ENCODE measurements at regions of chr18 and their contacts with region 1.

Region 1: DNA sequence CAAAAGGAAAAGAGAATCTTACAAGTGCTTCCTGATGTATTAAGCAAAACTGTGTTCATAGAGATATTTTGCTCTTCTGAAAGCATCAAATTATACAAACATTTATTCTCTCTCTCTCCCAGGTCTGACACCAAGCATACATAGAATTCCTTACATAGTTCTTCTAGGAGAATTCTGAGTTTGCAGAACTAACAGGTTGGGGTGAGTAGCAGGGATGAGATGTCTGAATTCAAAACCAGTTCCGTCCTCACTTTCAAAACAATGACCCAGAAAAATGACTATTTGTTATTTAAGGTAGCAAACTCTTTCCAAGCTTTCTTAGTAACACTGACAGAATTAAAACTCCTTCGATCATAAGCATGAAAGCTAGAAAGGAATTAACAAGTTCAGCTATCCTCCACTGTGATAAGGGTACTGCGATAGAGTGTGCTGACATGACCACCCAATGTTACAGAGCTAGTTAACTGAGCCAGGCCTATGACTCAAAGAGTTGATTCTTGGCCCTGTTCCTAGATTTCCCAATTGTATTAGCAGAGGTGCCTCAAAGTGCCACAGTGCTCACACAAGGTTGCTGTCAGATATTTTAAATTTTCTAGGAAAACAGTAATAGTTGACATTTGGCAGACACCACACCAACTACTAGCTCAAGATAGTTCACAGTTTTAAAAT is 85.8 kb upstream of the SETBP1 start:
- DNase-seq: no peak
- ATAC-seq: peak; percentile 36; the same call in 1 of the 2 replicates
- H3K4me3 Mint-ChIP-seq: no peak overlapping the region
- H3K27ac Mint-ChIP-seq: no peak overlapping the region
- H3K4me1 Mint-ChIP-seq: peaks cover 26% of the 10 kb centered on the region
- H3K27me3 Mint-ChIP-seq: no peaks in the 10 kb centered on the region
- CTCF ChIP-seq: no peak

Region 2: DNA sequence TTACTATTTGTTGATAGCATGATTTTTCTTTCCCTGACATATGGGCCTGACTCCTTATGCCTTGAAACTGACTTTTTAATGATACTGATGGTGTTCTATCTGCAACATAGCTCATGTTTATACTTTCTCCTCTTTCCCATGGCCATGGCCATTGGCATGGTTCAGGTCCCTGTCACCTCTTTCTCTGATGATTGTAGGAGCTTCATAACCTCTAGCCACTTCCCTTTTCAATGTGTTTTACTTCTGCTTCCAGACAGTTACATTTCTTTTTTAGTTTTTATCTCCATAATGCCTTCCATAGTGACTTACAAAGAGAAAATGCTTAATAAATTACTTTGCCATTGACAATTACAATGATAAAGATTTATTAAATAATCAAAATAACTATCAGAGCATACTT is 92.1 kb before region 1 on chr18:
- CTCF ChIA-PET with region 1: no interaction called
- POLR2A ChIA-PET with region 1: no interaction called
- DNase-seq: no peak
- ATAC-seq: no peak
- H3K4me3 Mint-ChIP-seq: no peak overlapping the region
- H3K27ac Mint-ChIP-seq: no peak overlapping the region
- H3K4me1 Mint-ChIP-seq: no peaks in the 10 kb centered on the region
- H3K27me3 Mint-ChIP-seq: no peaks in the 10 kb centered on the region
- CTCF ChIP-seq: no peak

Region 3: GRCh38 chr18:44620812-44621211 is 25.9 kb after region 1 on chr18:
- CTCF ChIA-PET with region 1: no interaction called
- POLR2A ChIA-PET with region 1: interaction called, 10 read pairs
- DNase-seq: no peak
- ATAC-seq: no peak
- H3K4me3 Mint-ChIP-seq: no peak overlapping the region
- H3K27ac Mint-ChIP-seq: no peak overlapping the region
- H3K4me1 Mint-ChIP-seq: peaks cover 24% of the 10 kb centered on the region
- H3K27me3 Mint-ChIP-seq: no peaks in the 10 kb centered on the region; the same call in 1 of the 2 replicates
- CTCF ChIP-seq: no peak